A673 (cell line): ENCODE measurements at regions of chr5 and their contacts with region 1.

Region 1: GRCh38 chr5:172059661-172060100 is 53.2 kb upstream of the FBXW11 start:
- DNase-seq: peak; percentile 41
- H3K4me3 ChIP-seq: no peak overlapping the region
- H3K27ac ChIP-seq: no peak overlapping the region
- H3K4me1 ChIP-seq: no peaks in the 10 kb centered on the region
- H3K27me3 ChIP-seq: no peaks in the 10 kb centered on the region
- CTCF ChIP-seq: peak; percentile 66

Region 2: DNA sequence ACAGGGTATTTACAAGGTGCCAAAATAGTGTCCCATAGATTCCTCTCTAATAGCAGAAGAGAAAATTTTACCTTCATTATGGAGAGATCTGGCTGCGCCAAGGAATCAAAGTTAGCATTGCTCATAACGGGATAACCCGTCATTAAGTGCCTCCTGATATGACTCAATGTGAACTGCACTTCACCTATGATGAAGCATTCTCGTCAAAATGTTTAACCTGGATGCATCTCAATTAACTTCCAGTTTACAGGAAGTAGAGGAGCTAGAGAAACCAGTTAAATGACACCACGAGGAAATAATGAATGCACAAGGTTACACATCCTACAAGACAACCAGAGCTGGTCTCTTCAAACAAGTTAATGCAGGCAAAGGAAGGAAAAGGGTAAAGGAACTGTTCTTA is 70.4 kb before region 1 on chr5:
- CTCF ChIA-PET with region 1: no interaction called
- POLR2A ChIA-PET with region 1: no interaction called
- intact Hi-C with region 1: no loop called
- DNase-seq: no peak
- H3K4me3 ChIP-seq: no peak overlapping the region
- H3K27ac ChIP-seq: no peak overlapping the region
- H3K4me1 ChIP-seq: peaks cover 9% of the 10 kb centered on the region
- H3K27me3 ChIP-seq: no peaks in the 10 kb centered on the region
- CTCF ChIP-seq: no peak

Region 3: GRCh38 chr5:172071289-172071875 is 11.7 kb after region 1 on chr5:
- CTCF ChIA-PET with region 1: interaction called, 11 read pairs
- POLR2A ChIA-PET with region 1: no interaction called
- intact Hi-C with region 1: no loop called
- DNase-seq: no peak
- H3K4me3 ChIP-seq: no peak overlapping the region
- H3K27ac ChIP-seq: no peak overlapping the region
- H3K4me1 ChIP-seq: no peaks in the 10 kb centered on the region
- H3K27me3 ChIP-seq: no peaks in the 10 kb centered on the region
- CTCF ChIP-seq: no peak

Region 4: DNA sequence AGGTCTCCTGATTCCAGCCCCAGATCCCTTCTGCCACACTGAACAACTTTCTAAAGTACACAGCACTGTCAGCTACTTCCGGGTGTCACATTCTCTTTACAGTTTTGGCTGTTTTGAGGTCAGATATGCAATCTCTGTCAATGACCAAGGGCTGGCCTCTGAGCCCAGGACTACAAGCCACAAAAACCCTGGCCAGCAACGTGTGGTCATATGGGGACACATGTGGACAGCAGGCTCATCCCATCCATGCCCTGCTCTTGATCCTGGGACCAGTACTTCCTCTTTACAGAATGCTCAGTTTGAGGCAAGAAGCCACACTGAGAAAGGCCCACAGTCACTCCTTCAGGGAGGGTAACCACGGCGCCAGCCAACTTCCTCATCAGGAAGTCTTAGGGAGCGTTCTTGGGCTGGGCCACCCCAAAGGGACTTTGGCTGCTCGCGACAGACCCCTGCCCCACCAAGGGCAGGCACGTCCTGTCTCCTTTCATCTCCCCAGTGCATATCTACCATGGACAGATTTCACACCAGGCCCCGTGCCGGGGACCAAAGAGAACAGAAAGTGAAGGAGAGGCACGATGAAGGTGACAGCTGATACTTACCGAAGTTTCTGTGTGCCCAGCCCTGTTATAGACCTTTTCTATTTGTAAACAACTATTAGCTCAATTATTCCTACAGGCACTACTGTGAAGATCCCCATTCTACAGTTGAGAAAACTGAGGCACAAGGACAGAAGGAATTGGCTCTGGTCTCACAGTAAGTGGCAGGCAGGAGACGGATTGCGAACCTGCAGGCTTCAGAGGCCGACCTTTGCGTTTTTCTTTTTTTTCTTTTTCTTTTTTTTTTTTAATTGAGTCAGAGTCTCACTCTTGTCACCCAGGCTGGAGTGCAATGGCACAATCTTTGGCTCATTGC is 91.1 kb after region 1 on chr5:
- CTCF ChIA-PET with region 1: no interaction called
- POLR2A ChIA-PET with region 1: no interaction called
- intact Hi-C with region 1: no loop called
- DNase-seq: no peak
- H3K4me3 ChIP-seq: no peak overlapping the region
- H3K27ac ChIP-seq: no peak overlapping the region
- H3K4me1 ChIP-seq: no peaks in the 10 kb centered on the region
- H3K27me3 ChIP-seq: no peaks in the 10 kb centered on the region
- CTCF ChIP-seq: no peak

Region 5: GRCh38 chr5:172162323-172162986 is 102.8 kb after region 1 on chr5:
- CTCF ChIA-PET with region 1: no interaction called
- POLR2A ChIA-PET with region 1: no interaction called
- intact Hi-C with region 1: no loop called
- DNase-seq: no peak
- H3K4me3 ChIP-seq: no peak overlapping the region
- H3K27ac ChIP-seq: no peak overlapping the region
- H3K4me1 ChIP-seq: no peaks in the 10 kb centered on the region
- H3K27me3 ChIP-seq: no peaks in the 10 kb centered on the region
- CTCF ChIP-seq: no peak